ENCODE measurements at regions of chr2 and their contacts with region 1.

Region 1: GRCh38 chr2:54899576-54900200 is 150.6 kb downstream of the RTN4 start:
- DNase-seq: no peak
- ATAC-seq: peak; percentile 75
- H3K4me3 ChIP-seq: no peak overlapping the region
- H3K27ac ChIP-seq: no peak overlapping the region
- H3K4me1 ChIP-seq: peaks cover 0 to 4% of the 10 kb centered on the region in 2 donors
- H3K27me3 ChIP-seq: no peaks in the 10 kb centered on the region

Region 2: DNA sequence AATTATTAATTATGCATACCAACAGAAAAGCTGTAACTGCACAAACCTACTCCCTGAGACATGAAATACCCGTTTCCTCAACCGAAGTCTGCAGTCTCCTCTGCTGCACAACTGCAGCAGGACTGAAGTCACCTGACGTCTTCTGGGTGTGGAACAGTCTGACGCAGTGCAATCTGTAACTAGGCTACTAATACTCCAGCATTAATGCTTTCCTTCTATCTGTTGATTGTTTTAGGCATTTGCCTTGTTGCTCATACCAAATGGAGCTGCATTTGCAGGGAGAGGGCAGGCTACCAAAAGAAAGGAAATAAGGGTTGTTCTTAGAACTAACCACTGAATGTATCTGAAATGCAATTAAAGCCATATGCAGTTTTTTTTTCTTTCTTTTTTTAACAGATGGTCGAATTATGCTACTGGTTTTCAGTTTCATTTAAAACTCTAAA is 110.5 kb after region 1 on chr2:
- intact Hi-C with region 1: loop called in 1 of 2 experiments (anchors 10 kb)
- DNase-seq: peak in 1 of 2 donors; percentile 61
- ATAC-seq: peak; percentile 88
- H3K4me3 ChIP-seq: peak overlapping the region in 1 of 2 donors; percentile 59
- H3K27ac ChIP-seq: no peak overlapping the region
- H3K4me1 ChIP-seq: peaks cover 6 to 7% of the 10 kb centered on the region in 2 donors
- H3K27me3 ChIP-seq: no peaks in the 10 kb centered on the region

Region 3: GRCh38 chr2:55175254-55176025 is 275.8 kb after region 1 on chr2:
- intact Hi-C with region 1: loop called (anchors 2 kb)
- DNase-seq: no peak
- ATAC-seq: peak; percentile 87
- H3K4me3 ChIP-seq: no peak overlapping the region
- H3K27ac ChIP-seq: no peak overlapping the region
- H3K4me1 ChIP-seq: no peaks in the 10 kb centered on the region
- H3K27me3 ChIP-seq: no peaks in the 10 kb centered on the region

Measured in aorta (tissue), 5 donors.